HEK293 (cell line): ENCODE measurements at regions of chr19 and their contacts with region 1.

Region 1: DNA sequence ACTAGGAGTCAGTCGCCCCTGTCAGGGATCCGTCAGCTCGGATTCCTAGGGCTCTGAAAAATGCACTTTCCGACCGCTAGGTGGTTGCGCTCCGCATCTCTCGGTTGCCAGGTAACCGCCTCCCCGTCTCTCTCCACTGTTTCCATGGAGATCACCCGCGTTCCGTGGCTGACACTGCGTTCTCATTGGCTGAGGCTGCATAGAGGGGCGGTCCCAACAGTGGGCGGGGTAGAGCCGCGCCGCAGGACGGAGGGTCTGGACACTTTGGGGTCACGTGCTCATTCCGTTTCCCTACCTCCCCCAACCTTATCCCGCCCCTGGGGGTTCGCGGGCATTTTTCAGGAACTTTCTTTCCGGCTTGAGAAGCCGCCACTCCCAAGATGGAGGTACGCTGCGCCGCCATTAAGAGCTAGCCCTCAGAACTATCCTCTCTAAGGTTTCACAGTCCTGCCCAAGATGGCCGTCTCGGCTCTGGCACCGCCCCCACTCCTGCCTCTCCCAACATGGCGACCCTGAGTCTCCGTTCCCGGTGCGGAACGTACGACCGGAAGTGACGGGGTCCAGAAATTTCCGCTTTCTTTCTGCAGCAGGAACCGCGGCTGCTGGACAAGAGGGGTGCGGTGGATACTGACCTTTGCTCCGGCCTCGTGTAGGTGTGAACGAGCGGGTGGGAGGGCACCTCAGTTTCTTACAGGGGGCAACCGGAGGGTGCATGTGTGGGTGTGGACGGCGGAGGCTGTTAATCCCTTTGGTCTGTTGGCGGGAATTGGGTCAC is at the starts of genes ODAD3 and PRKCSH:
- H3K4me3 ChIP-seq: peak within 1 kb of the TSS; percentile 91
- H3K27ac ChIP-seq: peak within 1 kb of the TSS; percentile 4; the same call in 1 of the 2 replicates
- H3K4me1 ChIP-seq: 0 out of 2 replicates have a peak, but pooled peaks cover 4% of the 10 kb centered on the region
- CTCF ChIP-seq: peak; percentile 96

Region 2: GRCh38 chr19:11399667-11400066 is 35.6 kb before region 1 on chr19:
- CTCF ChIA-PET with region 1: no interaction called
- POLR2A ChIA-PET with region 1: no interaction called
- H3K4me3 ChIP-seq: no peak overlapping the region
- H3K27ac ChIP-seq: no peak overlapping the region
- H3K4me1 ChIP-seq: no peaks in the 10 kb centered on the region
- CTCF ChIP-seq: no peak

Region 3: DNA sequence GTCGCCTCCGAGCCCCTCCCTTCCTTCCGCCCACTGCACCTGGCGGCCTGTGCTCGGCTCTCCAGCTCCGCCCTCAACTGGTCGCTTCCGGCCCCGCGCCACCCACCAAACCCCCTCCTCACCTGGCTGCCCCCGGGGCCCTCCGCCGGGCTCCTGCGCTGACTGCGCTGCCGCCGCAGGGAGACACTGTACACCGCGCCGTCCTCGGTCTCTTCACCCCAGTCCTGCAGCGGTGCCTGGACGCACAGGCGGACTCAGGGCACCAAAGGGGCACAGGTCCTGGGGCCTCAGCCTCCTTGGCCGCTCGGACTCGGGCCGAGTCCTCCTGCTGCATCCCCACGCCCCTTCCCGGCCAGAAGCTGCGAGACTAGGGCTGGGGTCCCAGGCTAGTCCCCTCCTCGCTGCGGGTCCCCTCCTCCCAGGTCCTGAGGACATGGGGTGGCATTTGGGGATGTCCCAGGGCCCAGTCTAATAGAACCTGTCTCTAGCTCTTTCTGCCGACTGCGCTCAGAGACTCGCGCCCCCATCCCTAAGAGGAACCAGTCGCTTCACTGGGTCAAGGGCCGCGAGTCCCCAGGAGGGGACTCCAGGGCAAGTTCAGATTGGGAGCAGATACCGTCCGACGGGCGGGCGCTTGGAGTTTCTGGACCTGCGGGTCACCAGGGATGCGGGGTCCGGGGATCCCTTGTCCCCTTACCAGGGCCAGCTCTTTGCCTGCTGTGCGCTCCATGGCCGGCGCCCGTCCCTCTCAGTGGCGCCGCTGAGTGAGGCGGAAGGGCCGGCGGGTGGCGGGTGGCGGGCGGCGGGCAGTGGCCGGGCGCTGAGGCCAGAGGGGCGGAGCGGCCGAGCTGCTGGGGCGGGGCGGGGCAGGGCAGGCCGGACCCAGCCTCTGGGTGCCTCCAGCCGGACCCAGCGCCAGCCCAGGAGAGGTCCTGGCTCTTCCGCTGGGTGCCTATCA is 16.4 kb before region 1 on chr19 and contains the start of gene RGL3:
- CTCF ChIA-PET with region 1: interaction called, 12 read pairs
- POLR2A ChIA-PET with region 1: interaction called, 4 read pairs
- H3K4me3 ChIP-seq: peak within 1 kb of the TSS; percentile 36
- H3K27ac ChIP-seq: no peak within 1 kb of the TSS
- H3K4me1 ChIP-seq: no peaks in the 10 kb centered on the region
- CTCF ChIP-seq: no peak

Region 4: DNA sequence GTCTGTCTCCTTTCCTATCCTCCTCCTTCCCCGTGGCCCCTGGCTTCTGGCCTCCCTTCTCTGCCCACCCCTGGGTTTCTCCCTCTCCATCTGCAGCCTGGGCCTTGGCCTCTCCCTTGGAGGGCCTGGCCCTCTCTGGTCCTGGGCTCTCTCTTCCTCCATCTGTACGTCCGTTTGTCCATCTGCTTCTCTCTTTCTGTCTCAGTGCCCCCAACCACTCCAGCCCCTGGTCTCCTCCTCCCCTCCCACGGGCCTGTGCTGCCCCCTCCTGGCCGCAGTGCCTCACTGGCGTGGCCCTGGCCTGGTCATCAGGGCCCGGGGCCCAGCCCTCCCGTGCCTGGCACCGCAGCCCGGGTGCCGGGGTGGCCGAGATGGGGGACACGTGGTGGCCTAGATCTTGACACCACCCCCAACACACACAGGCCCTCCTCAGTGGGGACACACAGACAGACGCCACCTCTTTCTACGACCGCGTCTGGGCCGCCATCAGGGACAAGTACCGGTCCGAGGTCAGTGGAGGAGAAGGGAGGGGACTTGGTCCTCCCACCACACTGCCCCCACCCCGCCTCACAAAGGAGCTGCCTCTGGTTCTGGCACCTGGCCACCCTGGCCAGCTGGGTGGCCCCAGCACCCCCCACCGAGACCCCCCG is 11.5 kb after region 1 on chr19:
- CTCF ChIA-PET with region 1: interaction called, 11 read pairs
- POLR2A ChIA-PET with region 1: interaction called, 3 read pairs
- H3K4me3 ChIP-seq: no peak overlapping the region
- H3K27ac ChIP-seq: no peak overlapping the region
- H3K4me1 ChIP-seq: no peaks in the 10 kb centered on the region
- CTCF ChIP-seq: peak; percentile 88